ENCODE measurements at regions of chr20 and their contacts with region 1.

Region 1: DNA sequence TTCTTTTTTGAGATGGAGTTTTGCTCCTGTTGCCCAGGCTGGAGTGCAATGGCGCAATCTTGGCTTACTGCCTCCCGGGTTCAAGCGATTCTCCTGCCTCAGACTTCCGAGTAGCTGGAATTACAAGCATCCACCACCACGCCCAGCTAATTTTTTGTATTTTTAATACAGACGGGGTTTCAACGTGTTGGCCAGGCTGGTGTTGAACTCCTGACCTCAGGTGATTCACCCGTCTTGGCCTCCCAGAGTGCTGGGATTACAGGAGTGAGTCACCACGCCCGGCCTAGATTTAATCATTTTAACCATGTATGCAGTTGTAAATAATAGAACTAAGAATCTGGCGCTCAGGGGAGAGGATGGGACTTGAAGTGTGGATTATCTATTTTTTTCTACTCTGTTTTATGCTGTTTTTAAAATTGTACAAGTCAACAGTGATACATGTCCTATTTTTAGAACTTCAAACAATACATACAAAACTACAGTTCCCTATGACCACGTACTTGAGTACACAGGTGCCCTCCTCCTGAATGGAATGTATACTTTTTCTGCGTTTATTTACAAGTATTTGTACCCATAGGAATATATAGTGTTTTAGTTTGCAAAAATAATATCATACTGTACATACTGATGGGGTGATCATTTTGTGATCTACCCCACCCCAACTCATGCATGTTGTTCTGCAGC is 27.8 kb downstream of the ITCH start:
- DNase-seq: peak; percentile 79
- H3K4me3 ChIP-seq: no peak overlapping the region
- H3K27ac ChIP-seq: no peak overlapping the region
- H3K4me1 ChIP-seq: peaks cover 31% of the 10 kb centered on the region
- H3K27me3 ChIP-seq: no peaks in the 10 kb centered on the region
- CTCF ChIP-seq: no peak
- POLR2A ChIP-seq: no peak

Region 2: GRCh38 chr20:34403908-34404307 is 13.0 kb after region 1 on chr20:
- CTCF ChIA-PET with region 1: interaction called, 3 read pairs
- POLR2A ChIA-PET with region 1: no interaction called
- dilution Hi-C with region 1: no loop called
- intact Hi-C with region 1: loop called (anchors 2 kb)
- DNase-seq: no peak
- H3K4me3 ChIP-seq: no peak overlapping the region
- H3K27ac ChIP-seq: no peak overlapping the region
- H3K4me1 ChIP-seq: peaks cover 11% of the 10 kb centered on the region
- H3K27me3 ChIP-seq: no peaks in the 10 kb centered on the region
- CTCF ChIP-seq: no peak
- POLR2A ChIP-seq: no peak

Region 3: GRCh38 chr20:34415079-34415478 is 24.2 kb after region 1 on chr20:
- CTCF ChIA-PET with region 1: no interaction called
- POLR2A ChIA-PET with region 1: no interaction called
- dilution Hi-C with region 1: no loop called
- intact Hi-C with region 1: no loop called
- DNase-seq: peak; percentile 45
- H3K4me3 ChIP-seq: no peak overlapping the region
- H3K27ac ChIP-seq: no peak overlapping the region
- H3K4me1 ChIP-seq: peaks cover 13% of the 10 kb centered on the region
- H3K27me3 ChIP-seq: no peaks in the 10 kb centered on the region
- CTCF ChIP-seq: no peak
- POLR2A ChIP-seq: no peak

Region 4: GRCh38 chr20:34468951-34469350 is 78.0 kb after region 1 on chr20:
- CTCF ChIA-PET with region 1: no interaction called
- POLR2A ChIA-PET with region 1: no interaction called
- dilution Hi-C with region 1: no loop called
- intact Hi-C with region 1: no loop called
- DNase-seq: no peak
- H3K4me3 ChIP-seq: no peak overlapping the region
- H3K27ac ChIP-seq: no peak overlapping the region
- H3K4me1 ChIP-seq: peaks cover 8% of the 10 kb centered on the region
- H3K27me3 ChIP-seq: no peaks in the 10 kb centered on the region
- CTCF ChIP-seq: no peak
- POLR2A ChIP-seq: no peak